GM12878 (cell line): ENCODE measurements at regions of chr3 and their contacts with region 1.

Region 1: DNA sequence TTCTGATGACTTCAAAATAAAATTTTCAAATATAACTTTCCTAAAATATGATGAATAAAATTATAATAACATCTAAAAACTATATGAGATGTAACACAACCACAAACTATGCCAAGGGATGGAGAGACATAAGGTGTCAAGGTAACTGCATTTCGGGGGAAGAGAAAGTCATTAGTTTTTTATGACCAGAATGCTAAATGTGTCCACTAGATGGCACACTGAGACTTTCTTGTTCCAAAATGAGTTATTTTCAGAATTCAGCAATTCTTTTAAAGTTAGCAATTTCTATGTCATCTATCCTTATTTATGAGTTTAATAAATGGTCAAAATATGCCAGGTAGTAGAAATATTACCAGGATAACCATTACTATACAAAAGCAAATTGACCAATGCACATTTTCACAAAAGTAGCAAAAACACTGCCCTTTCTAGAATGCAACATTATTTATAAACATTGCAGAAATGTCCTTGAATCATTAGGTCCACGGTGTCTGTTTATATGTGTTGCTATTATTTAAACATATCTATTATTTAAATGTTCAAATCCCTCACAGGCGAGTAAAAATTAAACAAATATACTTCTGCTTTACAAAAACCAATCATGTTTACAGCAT is 374.2 kb downstream of the PLCL2 start:
- DNase-seq: no peak
- ATAC-seq: peak; percentile 49; the same call in 2 of the 3 replicates
- H3K4me3 ChIP-seq: no peak overlapping the region
- H3K27ac ChIP-seq: no peak overlapping the region
- H3K4me1 ChIP-seq: no peaks in the 10 kb centered on the region
- H3K27me3 ChIP-seq: no peaks in the 10 kb centered on the region
- CTCF ChIP-seq: peak; percentile 54 to 70 (median 65)
- EP300 ChIP-seq: no peak
- POLR2A ChIP-seq: no peak
- RAD21 ChIP-seq: peak; percentile 75

Region 2: GRCh38 chr3:17239417-17239816 is 19.5 kb before region 1 on chr3:
- CTCF ChIA-PET with region 1: no interaction called
- POLR2A ChIA-PET with region 1: no interaction called
- RAD21 ChIA-PET with region 1: no interaction called
- SMC1A ChIA-PET with region 1: no interaction called
- in situ Hi-C with region 1: no loop called
- intact Hi-C with region 1: no loop called
- DNase-seq: no peak
- ATAC-seq: no peak
- H3K4me3 ChIP-seq: no peak overlapping the region
- H3K27ac ChIP-seq: no peak overlapping the region
- H3K4me1 ChIP-seq: no peaks in the 10 kb centered on the region
- H3K27me3 ChIP-seq: no peaks in the 10 kb centered on the region
- CTCF ChIP-seq: no peak
- EP300 ChIP-seq: no peak
- POLR2A ChIP-seq: no peak
- RAD21 ChIP-seq: no peak

Region 3: DNA sequence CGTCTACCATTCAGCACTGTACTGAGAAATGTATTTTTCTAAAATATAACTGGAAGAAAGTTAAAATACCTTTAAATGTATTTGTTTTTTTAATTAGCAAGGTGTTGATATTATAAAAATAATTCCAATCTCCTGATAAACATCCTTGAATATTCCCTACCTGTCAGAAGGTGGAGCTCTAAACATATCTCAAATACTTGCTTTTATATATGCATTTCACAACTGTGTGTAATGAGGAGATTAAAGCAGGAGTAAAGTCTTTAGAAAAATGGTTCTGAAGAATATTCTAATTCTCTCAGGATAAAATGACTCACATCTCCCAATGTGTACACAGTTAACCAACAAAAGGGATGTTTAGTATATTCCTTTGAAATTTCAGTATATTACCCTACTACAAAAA is 48.6 kb after region 1 on chr3:
- CTCF ChIA-PET with region 1: no interaction called
- POLR2A ChIA-PET with region 1: no interaction called
- RAD21 ChIA-PET with region 1: no interaction called
- SMC1A ChIA-PET with region 1: no interaction called
- in situ Hi-C with region 1: no loop called
- intact Hi-C with region 1: no loop called
- DNase-seq: no peak
- ATAC-seq: no peak
- H3K4me3 ChIP-seq: no peak overlapping the region
- H3K27ac ChIP-seq: no peak overlapping the region
- H3K4me1 ChIP-seq: no peaks in the 10 kb centered on the region
- H3K27me3 ChIP-seq: no peaks in the 10 kb centered on the region
- CTCF ChIP-seq: no peak; a peak in 1 of 6 replicates
- EP300 ChIP-seq: no peak
- POLR2A ChIP-seq: no peak
- RAD21 ChIP-seq: peak; percentile 19; the same call in 1 of the 2 replicates

Region 4: DNA sequence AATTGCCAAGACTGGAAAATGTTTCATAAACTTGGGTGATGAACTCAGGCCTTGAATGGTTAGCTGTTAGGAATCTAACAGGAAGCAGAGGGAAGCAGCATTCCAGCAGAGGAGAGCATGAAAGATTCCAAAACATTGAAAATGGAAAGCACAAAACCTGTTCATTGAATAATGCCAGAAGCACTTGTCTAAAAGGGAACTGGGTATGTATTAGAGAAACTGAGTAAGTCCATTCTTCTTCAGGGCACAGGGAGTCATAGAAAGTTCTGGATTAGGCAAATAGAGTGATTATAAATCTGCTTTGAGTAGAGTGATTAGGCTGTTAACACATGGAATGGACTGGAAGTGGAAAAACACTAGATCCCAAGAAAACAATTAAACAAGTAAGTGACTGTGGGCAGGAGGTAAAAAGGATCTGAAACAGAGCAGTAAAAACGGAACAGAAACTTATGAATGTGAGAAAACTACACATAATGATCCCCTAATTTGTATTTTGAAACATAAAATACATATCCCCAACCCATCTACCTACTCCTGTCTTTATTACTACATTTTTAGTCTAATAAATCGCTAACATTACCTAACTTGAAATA is 140.1 kb after region 1 on chr3:
- CTCF ChIA-PET with region 1: interaction called, 10 read pairs
- POLR2A ChIA-PET with region 1: no interaction called
- RAD21 ChIA-PET with region 1: no interaction called
- SMC1A ChIA-PET with region 1: interaction called, 3 read pairs
- in situ Hi-C with region 1: loop called (anchors 5 kb)
- intact Hi-C with region 1: no loop called
- DNase-seq: peak; percentile 57
- ATAC-seq: peak; percentile 98
- H3K4me3 ChIP-seq: no peak overlapping the region
- H3K27ac ChIP-seq: peak overlapping the region; percentile 68
- H3K4me1 ChIP-seq: peaks cover 15% of the 10 kb centered on the region
- H3K27me3 ChIP-seq: no peaks in the 10 kb centered on the region
- CTCF ChIP-seq: no peak
- EP300 ChIP-seq: peak; percentile 71 to 97; a peak in 3 of 4 replicates
- POLR2A ChIP-seq: no peak
- RAD21 ChIP-seq: no peak

Region 5: GRCh38 chr3:17535274-17535673 is 276.3 kb after region 1 on chr3:
- CTCF ChIA-PET with region 1: no interaction called
- POLR2A ChIA-PET with region 1: no interaction called
- RAD21 ChIA-PET with region 1: no interaction called
- SMC1A ChIA-PET with region 1: no interaction called
- in situ Hi-C with region 1: no loop called
- intact Hi-C with region 1: no loop called
- DNase-seq: no peak
- ATAC-seq: no peak
- H3K4me3 ChIP-seq: no peak overlapping the region
- H3K27ac ChIP-seq: no peak overlapping the region
- H3K4me1 ChIP-seq: no peaks in the 10 kb centered on the region
- H3K27me3 ChIP-seq: no peaks in the 10 kb centered on the region
- CTCF ChIP-seq: no peak
- EP300 ChIP-seq: no peak
- POLR2A ChIP-seq: no peak
- RAD21 ChIP-seq: no peak

Region 6: DNA sequence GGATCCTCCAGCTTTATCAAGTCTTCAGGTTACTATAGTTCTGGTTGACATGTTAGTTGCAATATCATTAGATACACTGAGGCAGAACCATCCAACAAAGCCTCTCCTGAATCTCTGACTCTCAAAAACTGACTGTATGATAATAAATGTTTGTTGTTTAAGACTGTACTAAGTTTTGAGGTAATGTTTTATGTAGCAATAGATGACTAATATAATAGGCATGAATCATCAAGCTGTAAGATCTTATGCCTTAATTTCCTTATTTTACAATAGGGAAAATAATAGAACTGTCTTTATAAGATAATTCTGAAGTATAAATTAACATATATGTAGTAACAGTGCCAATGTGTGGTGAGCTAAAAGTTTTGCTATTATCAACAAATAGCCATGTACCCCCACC is 572.4 kb after region 1 on chr3:
- CTCF ChIA-PET with region 1: no interaction called
- POLR2A ChIA-PET with region 1: no interaction called
- RAD21 ChIA-PET with region 1: no interaction called
- SMC1A ChIA-PET with region 1: no interaction called
- in situ Hi-C with region 1: loop called (anchors 10 kb)
- intact Hi-C with region 1: no loop called
- DNase-seq: no peak
- ATAC-seq: no peak
- H3K4me3 ChIP-seq: no peak overlapping the region
- H3K27ac ChIP-seq: no peak overlapping the region
- H3K4me1 ChIP-seq: no peaks in the 10 kb centered on the region
- H3K27me3 ChIP-seq: no peaks in the 10 kb centered on the region
- CTCF ChIP-seq: no peak
- EP300 ChIP-seq: no peak
- POLR2A ChIP-seq: no peak
- RAD21 ChIP-seq: no peak